Activated naive CD8-positive, alpha-beta T cell treated with anti-CD3 and anti-CD28 coated beads, Interleukin-2, amount 10 ng/mL, durations not matched to agents 7 days and 5 days (primary cell): ENCODE measurements at regions of chr2 and their contacts with region 1.

Region 1: GRCh38 chr2:97740590-97741182 is 27.3 kb downstream of the ZAP70 start:
- DNase-seq: peak; percentile 52
- ATAC-seq: no peak
- H3K4me3 Mint-ChIP-seq: no peak overlapping the region
- H3K27ac Mint-ChIP-seq: peak overlapping the region; percentile 47
- H3K4me1 Mint-ChIP-seq: peaks cover 53% of the 10 kb centered on the region
- H3K27me3 Mint-ChIP-seq: no peaks in the 10 kb centered on the region

Region 2: GRCh38 chr2:97688062-97688827 is 52.4 kb before region 1 on chr2:
- POLR2A ChIA-PET with region 1: no interaction called
- DNase-seq: no peak
- ATAC-seq: no peak
- H3K4me3 Mint-ChIP-seq: no peak overlapping the region
- H3K27ac Mint-ChIP-seq: no peak overlapping the region
- H3K4me1 Mint-ChIP-seq: peaks cover 12% of the 10 kb centered on the region
- H3K27me3 Mint-ChIP-seq: peaks cover 9% of the 10 kb centered on the region

Region 3: GRCh38 chr2:97718051-97718882 is 22.4 kb before region 1 on chr2:
- POLR2A ChIA-PET with region 1: interaction called, 60 read pairs
- DNase-seq: peak; percentile 78
- ATAC-seq: peak; percentile 75
- H3K4me3 Mint-ChIP-seq: peak overlapping the region; percentile 98
- H3K27ac Mint-ChIP-seq: peak overlapping the region; percentile 100
- H3K4me1 Mint-ChIP-seq: peaks cover 58% of the 10 kb centered on the region
- H3K27me3 Mint-ChIP-seq: no peaks in the 10 kb centered on the region

Region 4: GRCh38 chr2:97728091-97728731 is 12.5 kb before region 1 on chr2:
- POLR2A ChIA-PET with region 1: interaction called, 12 read pairs
- DNase-seq: peak; percentile 26
- ATAC-seq: peak; percentile 31
- H3K4me3 Mint-ChIP-seq: no peak overlapping the region
- H3K27ac Mint-ChIP-seq: peak overlapping the region; percentile 80
- H3K4me1 Mint-ChIP-seq: peaks cover 42% of the 10 kb centered on the region
- H3K27me3 Mint-ChIP-seq: no peaks in the 10 kb centered on the region